ENCODE measurements at regions of chr3 and their contacts with region 1.

Region 1: GRCh38 chr3:184805351-184806038 is 6.5 kb upstream of the VPS8 start:
- DNase-seq: no peak
- H3K4me3 ChIP-seq: no peak overlapping the region
- H3K27ac ChIP-seq: no peak overlapping the region
- H3K27me3 ChIP-seq: no peaks in the 10 kb centered on the region
- CTCF ChIP-seq: no peak

Region 2: GRCh38 chr3:184786280-184786941 is 19.1 kb before region 1 on chr3:
- CTCF ChIA-PET with region 1: interaction called, 31 read pairs
- POLR2A ChIA-PET with region 1: interaction called, 3 read pairs
- DNase-seq: peak; percentile 74
- H3K4me3 ChIP-seq: peak overlapping the region; percentile 27
- H3K27ac ChIP-seq: peak overlapping the region; percentile 93
- H3K27me3 ChIP-seq: no peaks in the 10 kb centered on the region
- CTCF ChIP-seq: no peak

Measured in AG04450 (cell line).